ENCODE measurements at regions of chr1 and their contacts with region 1.

Region 1: DNA sequence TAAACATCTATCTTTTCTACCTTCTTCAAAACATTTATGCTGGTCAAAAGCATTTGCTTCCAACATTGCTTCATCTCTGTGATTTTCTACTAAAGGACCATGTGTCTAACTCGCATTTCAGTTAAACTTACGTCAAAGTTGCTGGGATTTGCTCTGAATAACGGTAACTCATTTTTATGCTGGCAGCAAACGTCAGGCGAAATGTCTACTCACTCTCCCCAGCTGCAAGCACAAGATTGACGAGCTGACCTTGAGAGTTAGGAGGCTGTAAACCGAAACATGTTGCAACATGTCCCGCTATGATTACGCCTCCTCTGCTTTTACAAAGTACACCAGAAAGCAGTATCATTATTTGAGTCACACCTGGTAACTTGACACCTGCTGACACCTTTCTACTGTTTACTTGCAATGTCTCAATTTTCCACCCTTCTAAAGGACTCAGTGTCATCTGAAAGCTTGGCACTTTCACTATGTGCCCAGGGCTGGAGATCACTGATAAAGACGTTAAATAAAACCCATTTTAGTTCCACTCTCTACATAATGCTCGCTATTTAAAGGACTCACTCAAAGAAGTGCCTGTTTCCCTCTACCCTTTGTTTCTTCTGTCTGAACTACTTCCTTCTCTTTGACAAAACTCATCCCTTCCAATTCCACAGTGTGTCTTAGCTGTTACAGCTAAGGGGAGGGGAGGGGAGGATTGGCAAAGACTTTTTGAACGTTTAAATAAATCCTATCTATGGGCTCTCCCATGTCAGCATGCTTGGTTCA is 111.9 kb downstream of the PTPN14 start:
- DNase-seq: peak; percentile 79
- ATAC-seq: peak; percentile 87
- H3K4me3 Mint-ChIP-seq: peak overlapping the region; percentile 67
- H3K27ac Mint-ChIP-seq: peak overlapping the region; percentile 96
- H3K4me1 Mint-ChIP-seq: peaks cover 48% of the 10 kb centered on the region
- H3K27me3 Mint-ChIP-seq: peaks cover 2% of the 10 kb centered on the region

Region 2: GRCh38 chr1:214427871-214428277 is 11.7 kb before region 1 on chr1:
- CTCF ChIA-PET with region 1: interaction called, 5 read pairs
- POLR2A ChIA-PET with region 1: interaction called, 13 read pairs
- intact Hi-C with region 1: loop called (anchors 1 kb)
- DNase-seq: peak; percentile 84
- ATAC-seq: peak; percentile 99
- H3K4me3 Mint-ChIP-seq: peak overlapping the region; percentile 36
- H3K27ac Mint-ChIP-seq: peak overlapping the region; percentile 91
- H3K4me1 Mint-ChIP-seq: peaks cover 28% of the 10 kb centered on the region
- H3K27me3 Mint-ChIP-seq: no peaks in the 10 kb centered on the region

Region 3: DNA sequence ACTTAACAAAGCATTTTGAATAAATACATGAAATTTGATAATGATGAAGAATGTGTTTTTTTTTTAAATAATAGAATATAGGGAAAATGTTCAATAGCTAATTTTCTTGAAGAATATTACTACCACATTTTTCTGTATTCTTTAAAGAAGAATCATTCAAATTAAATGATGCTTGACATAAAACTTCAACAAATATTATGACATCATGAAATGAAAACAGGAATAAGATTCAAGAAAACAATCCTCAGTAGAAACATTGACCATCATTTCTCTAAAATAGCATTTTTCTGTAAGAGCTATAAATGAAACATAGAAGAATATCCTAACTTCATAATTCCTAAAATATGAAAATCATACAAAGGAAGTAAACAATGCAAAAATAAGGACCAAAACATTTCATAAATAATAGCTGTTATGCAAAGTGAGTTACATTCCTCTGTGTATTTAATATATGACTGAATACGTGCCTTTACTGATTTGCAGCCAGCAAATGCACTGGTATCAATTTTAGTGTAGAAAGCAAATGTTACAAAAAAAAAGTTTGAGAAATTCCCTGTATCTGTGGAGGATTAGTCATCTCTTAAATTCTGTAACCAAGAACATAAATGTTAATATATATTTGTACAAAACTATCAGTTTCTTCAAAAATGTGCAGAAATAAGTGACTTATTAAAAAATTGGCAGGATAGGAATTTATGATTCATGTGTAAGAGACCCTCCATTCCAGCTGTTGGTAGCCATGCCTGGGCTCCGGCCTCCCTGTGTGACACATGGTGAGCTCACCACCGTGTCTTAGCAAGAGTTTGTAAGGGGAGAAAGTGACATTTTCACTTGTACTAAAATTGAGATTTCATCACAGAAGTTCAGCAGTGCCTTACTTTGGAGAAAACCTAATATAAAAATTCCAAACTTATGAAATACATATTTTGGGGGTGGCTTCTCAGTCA is 126.9 kb after region 1 on chr1:
- CTCF ChIA-PET with region 1: no interaction called
- POLR2A ChIA-PET with region 1: no interaction called
- intact Hi-C with region 1: loop called (anchors 5 kb)
- DNase-seq: peak; percentile 61
- ATAC-seq: peak; percentile 82
- H3K4me3 Mint-ChIP-seq: no peak overlapping the region
- H3K27ac Mint-ChIP-seq: no peak overlapping the region
- H3K4me1 Mint-ChIP-seq: peaks cover 11% of the 10 kb centered on the region
- H3K27me3 Mint-ChIP-seq: peaks cover 9% of the 10 kb centered on the region

Region 4: DNA sequence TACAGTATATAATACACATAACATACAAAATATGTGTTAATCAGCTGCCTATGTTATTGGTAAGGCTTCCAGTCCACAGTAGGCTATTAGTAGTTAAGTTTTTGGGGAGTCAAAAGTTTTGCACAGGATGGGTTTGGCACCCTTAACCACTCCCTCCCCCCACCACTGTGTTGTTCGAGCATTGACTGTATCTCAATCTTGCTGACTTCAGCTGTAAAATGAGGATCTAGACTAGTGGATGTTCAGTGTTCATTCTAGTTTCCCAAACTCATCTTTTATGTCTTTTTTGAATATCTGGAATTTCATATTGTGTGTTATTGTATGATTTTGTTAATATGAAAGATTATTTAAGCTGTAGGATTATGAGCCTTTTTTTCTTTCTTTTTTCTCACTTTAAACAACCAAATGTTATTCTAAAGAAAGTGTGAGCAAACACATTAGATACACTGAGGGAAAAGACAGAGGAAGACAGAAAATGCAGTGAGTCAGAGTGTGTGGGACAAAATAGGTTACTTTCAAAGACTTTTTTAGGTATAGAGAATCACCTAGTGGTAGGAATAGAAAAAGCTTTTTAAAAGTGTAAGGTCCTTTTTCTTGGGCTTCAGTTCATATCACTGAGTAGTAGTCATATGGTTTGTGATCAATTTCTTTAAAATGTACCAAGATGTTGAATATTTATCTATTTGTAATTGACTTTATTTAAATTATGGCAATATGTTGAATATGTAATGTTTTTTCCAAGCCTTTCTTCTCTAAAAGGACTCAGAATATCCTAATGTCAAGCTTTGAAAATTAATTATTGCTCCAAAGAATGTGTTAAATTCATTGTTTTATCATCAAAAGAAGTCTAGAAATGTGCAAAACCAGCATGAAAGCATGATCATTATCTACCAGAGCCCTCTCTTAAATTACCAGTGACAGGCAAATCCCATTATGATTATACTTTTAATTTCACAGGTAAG is 145.6 kb after region 1 on chr1:
- CTCF ChIA-PET with region 1: no interaction called
- POLR2A ChIA-PET with region 1: no interaction called
- intact Hi-C with region 1: no loop called
- DNase-seq: no peak
- ATAC-seq: peak; percentile 89
- H3K4me3 Mint-ChIP-seq: no peak overlapping the region
- H3K27ac Mint-ChIP-seq: no peak overlapping the region
- H3K4me1 Mint-ChIP-seq: peaks cover 6% of the 10 kb centered on the region
- H3K27me3 Mint-ChIP-seq: peaks cover 3% of the 10 kb centered on the region

Region 5: GRCh38 chr1:215566556-215567490 is 1127.3 kb after region 1 on chr1 and contains the start of gene KCTD3:
- CTCF ChIA-PET with region 1: no interaction called
- POLR2A ChIA-PET with region 1: no interaction called
- intact Hi-C with region 1: loop called in 1 of 2 experiments (anchors 10 kb)
- DNase-seq: peak; percentile 76
- ATAC-seq: peak; percentile 60
- H3K4me3 Mint-ChIP-seq: peak within 1 kb of the TSS; percentile 92
- H3K27ac Mint-ChIP-seq: peak within 1 kb of the TSS; percentile 87
- H3K4me1 Mint-ChIP-seq: peaks cover 30% of the 10 kb centered on the region
- H3K27me3 Mint-ChIP-seq: peaks cover 8% of the 10 kb centered on the region
- total RNA-seq, gene KCTD3: 4.0 to 4.2 TPM

Measured in activated CD4-positive, alpha-beta T cell treated with anti-CD3 and anti-CD28 coated beads for 36 hours (primary cell).